Naive thymus-derived CD4-positive, alpha-beta T cell (primary cell): ENCODE measurements at regions of chr2 and their contacts with region 1.

Region 1: GRCh38 chr2:84905181-84906107 is at the start of gene TMSB10:
- DNase-seq: peak; percentile 87 to 98 (median 94)
- ATAC-seq: peak; percentile 88
- H3K4me3 ChIP-seq: peak within 1 kb of the TSS; percentile 89
- H3K4me3 Mint-ChIP-seq: peak within 1 kb of the TSS; percentile 90 to 98 (median 95)
- H3K27ac ChIP-seq: peak within 1 kb of the TSS; percentile 81
- H3K27ac Mint-ChIP-seq: peak within 1 kb of the TSS; percentile 89 to 99 (median 96)
- H3K4me1 ChIP-seq: peaks cover 30 to 34% of the 10 kb centered on the region in 2 donors
- H3K4me1 Mint-ChIP-seq: peaks cover 39 to 73% (median 67%) of the 10 kb centered on the region in 7 donors
- H3K27me3 ChIP-seq: no peaks in the 10 kb centered on the region
- H3K27me3 Mint-ChIP-seq: peaks cover 0 to 2% (median 0%) of the 10 kb centered on the region in 5 donors
- total RNA-seq, gene TMSB10: 1,492 to 5,756 (median 1,578) TPM

Region 2: GRCh38 chr2:84516234-84516986 is 389.0 kb before region 1 on chr2 and contains the start of gene DNAH6:
- CTCF ChIA-PET with region 1: no interaction called
- POLR2A ChIA-PET with region 1: interaction called, 3 read pairs
- intact Hi-C with region 1: loop called in 1 of 2 experiments (anchors 1 kb)
- DNase-seq: peak; percentile 67 to 94 (median 89)
- ATAC-seq: peak; percentile 99
- H3K4me3 ChIP-seq: peak within 1 kb of the TSS; percentile 78
- H3K4me3 Mint-ChIP-seq: peak within 1 kb of the TSS; percentile 79 to 93 (median 90)
- H3K27ac ChIP-seq: peak within 1 kb of the TSS; percentile 75
- H3K27ac Mint-ChIP-seq: peak within 1 kb of the TSS; percentile 66 to 98 (median 93)
- H3K4me1 ChIP-seq: peaks cover 5 to 6% of the 10 kb centered on the region in 2 donors
- H3K4me1 Mint-ChIP-seq: peaks cover 6 to 27% (median 23%) of the 10 kb centered on the region in 7 donors
- H3K27me3 ChIP-seq: no peaks in the 10 kb centered on the region
- H3K27me3 Mint-ChIP-seq: peaks cover 0 to 41% (median 0%) of the 10 kb centered on the region in 5 donors
- total RNA-seq, gene DNAH6: 0.73 to 2.3 (median 1.1) TPM

Region 3: DNA sequence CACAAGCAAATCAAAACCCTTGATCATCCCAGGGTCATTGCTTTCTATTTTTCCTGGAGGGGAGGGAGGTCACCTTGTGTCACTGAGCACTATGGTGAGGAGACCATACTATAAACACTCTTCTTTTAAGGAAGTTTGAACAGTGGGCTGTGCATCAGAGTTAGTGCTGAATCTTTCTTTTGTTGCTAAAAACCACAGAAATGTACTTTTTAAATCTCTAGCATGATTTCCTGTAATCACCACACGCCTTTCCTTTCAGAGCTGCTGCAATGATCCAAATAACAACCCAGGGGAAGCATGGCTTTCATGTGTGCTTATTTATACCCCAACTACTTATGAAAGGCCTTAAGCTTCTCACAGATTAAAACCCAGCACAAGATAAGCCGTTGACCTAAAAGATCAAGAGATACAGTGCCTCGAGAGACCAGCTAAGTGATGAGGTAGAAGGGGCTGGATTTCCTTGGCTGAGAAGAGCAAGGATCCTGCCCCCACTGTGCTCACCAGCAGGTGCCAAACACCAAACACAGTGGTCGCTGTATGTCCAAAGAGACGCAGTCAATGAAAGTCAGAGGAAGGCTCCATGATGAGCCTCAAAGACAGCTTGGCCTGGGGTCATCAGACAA is 59.3 kb before region 1 on chr2:
- CTCF ChIA-PET with region 1: interaction called, 4 read pairs
- POLR2A ChIA-PET with region 1: interaction called, 67 read pairs
- intact Hi-C with region 1: loop called (anchors 2 to 5 kb)
- DNase-seq: peak in 7 of 9 donors; percentile 68 to 89 (median 84)
- ATAC-seq: peak; percentile 85
- H3K4me3 ChIP-seq: peak overlapping the region; percentile 14
- H3K4me3 Mint-ChIP-seq: peak overlapping the region; percentile 72 to 87 (median 82)
- H3K27ac ChIP-seq: peak overlapping the region; percentile 80
- H3K27ac Mint-ChIP-seq: peak overlapping the region in 8 of 9 donors; percentile 94 to 99 (median 97)
- H3K4me1 ChIP-seq: peaks cover 93 to 98% of the 10 kb centered on the region in 2 donors
- H3K4me1 Mint-ChIP-seq: peaks cover 77 to 100% (median 92%) of the 10 kb centered on the region in 7 donors
- H3K27me3 ChIP-seq: no peaks in the 10 kb centered on the region
- H3K27me3 Mint-ChIP-seq: no peaks in the 10 kb centered on the region

Region 4: DNA sequence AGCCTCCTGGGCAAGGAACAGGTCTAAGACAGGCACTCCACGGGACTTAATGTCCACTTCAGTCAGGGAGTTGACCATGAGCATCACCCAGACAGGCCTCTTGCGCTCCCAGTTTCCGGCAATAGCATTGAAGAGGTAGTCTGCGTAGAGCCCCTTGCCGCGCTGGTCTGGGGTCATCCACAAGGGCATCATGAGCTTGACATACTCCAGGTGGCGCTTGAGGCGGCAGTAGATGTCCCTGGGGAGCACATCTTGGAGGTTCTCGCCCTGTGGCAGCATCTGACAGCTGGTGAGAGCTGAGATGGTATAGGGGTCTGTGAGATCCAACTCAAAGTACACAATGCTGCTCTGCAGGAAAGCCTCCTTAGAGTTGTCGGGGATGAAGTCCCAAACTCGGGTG is 35.1 kb before region 1 on chr2:
- CTCF ChIA-PET with region 1: interaction called, 3 read pairs
- POLR2A ChIA-PET with region 1: interaction called, 617 read pairs
- intact Hi-C with region 1: no loop called
- DNase-seq: no peak
- ATAC-seq: no peak
- H3K4me3 ChIP-seq: no peak overlapping the region
- H3K4me3 Mint-ChIP-seq: peak overlapping the region; percentile 15 to 89 (median 68)
- H3K27ac ChIP-seq: peak overlapping the region; percentile 24
- H3K27ac Mint-ChIP-seq: peak overlapping the region in 8 of 9 donors; percentile 33 to 98 (median 92)
- H3K4me1 ChIP-seq: peaks cover 2 to 75% of the 10 kb centered on the region in 2 donors
- H3K4me1 Mint-ChIP-seq: peaks cover 34 to 97% (median 87%) of the 10 kb centered on the region in 7 donors
- H3K27me3 ChIP-seq: no peaks in the 10 kb centered on the region
- H3K27me3 Mint-ChIP-seq: no peaks in the 10 kb centered on the region

Region 5: GRCh38 chr2:84894758-84895520 is 10.5 kb before region 1 on chr2:
- CTCF ChIA-PET with region 1: interaction called, 23 read pairs
- POLR2A ChIA-PET with region 1: interaction called, 617 read pairs
- intact Hi-C with region 1: loop called (anchors 1 kb)
- DNase-seq: peak in 6 of 9 donors; percentile 36 to 61 (median 53)
- ATAC-seq: peak; percentile 70
- H3K4me3 ChIP-seq: peak overlapping the region; percentile 40
- H3K4me3 Mint-ChIP-seq: peak overlapping the region; percentile 47 to 82 (median 71)
- H3K27ac ChIP-seq: peak overlapping the region; percentile 77
- H3K27ac Mint-ChIP-seq: peak overlapping the region; percentile 53 to 99 (median 93)
- H3K4me1 ChIP-seq: peaks cover 37 to 47% of the 10 kb centered on the region in 2 donors
- H3K4me1 Mint-ChIP-seq: peaks cover 40 to 71% (median 64%) of the 10 kb centered on the region in 7 donors
- H3K27me3 ChIP-seq: no peaks in the 10 kb centered on the region
- H3K27me3 Mint-ChIP-seq: no peaks in the 10 kb centered on the region

Region 6: GRCh38 chr2:84939426-84940087 is 34.1 kb after region 1 on chr2:
- CTCF ChIA-PET with region 1: no interaction called
- POLR2A ChIA-PET with region 1: interaction called, 34 read pairs
- intact Hi-C with region 1: loop called in 1 of 2 experiments (anchors 1 kb)
- DNase-seq: peak; percentile 31 to 76 (median 65)
- ATAC-seq: peak; percentile 92
- H3K4me3 ChIP-seq: peak overlapping the region; percentile 29
- H3K4me3 Mint-ChIP-seq: peak overlapping the region; percentile 66 to 90 (median 82)
- H3K27ac ChIP-seq: peak overlapping the region; percentile 72
- H3K27ac Mint-ChIP-seq: peak overlapping the region; percentile 88 to 100 (median 98)
- H3K4me1 ChIP-seq: peaks cover 20 to 21% of the 10 kb centered on the region in 2 donors
- H3K4me1 Mint-ChIP-seq: peaks cover 17 to 68% (median 34%) of the 10 kb centered on the region in 7 donors
- H3K27me3 ChIP-seq: no peaks in the 10 kb centered on the region
- H3K27me3 Mint-ChIP-seq: no peaks in the 10 kb centered on the region

Region 7: GRCh38 chr2:84954329-84954728 is 48.9 kb after region 1 on chr2:
- CTCF ChIA-PET with region 1: no interaction called
- POLR2A ChIA-PET with region 1: no interaction called
- intact Hi-C with region 1: no loop called
- DNase-seq: no peak
- ATAC-seq: no peak
- H3K4me3 ChIP-seq: no peak overlapping the region
- H3K4me3 Mint-ChIP-seq: no peak overlapping the region
- H3K27ac ChIP-seq: no peak overlapping the region
- H3K27ac Mint-ChIP-seq: peak overlapping the region in 2 of 9 donors; percentile 11 to 47
- H3K4me1 ChIP-seq: no peaks in the 10 kb centered on the region
- H3K4me1 Mint-ChIP-seq: peaks cover 7 to 23% (median 11%) of the 10 kb centered on the region in 7 donors
- H3K27me3 ChIP-seq: no peaks in the 10 kb centered on the region
- H3K27me3 Mint-ChIP-seq: no peaks in the 10 kb centered on the region

Region 8: GRCh38 chr2:84970868-84971509 is 65.5 kb after region 1 on chr2 and contains the start of gene KCMF1:
- CTCF ChIA-PET with region 1: no interaction called
- POLR2A ChIA-PET with region 1: interaction called, 15 read pairs
- intact Hi-C with region 1: loop called in 1 of 2 experiments (anchors 1 kb)
- DNase-seq: peak; percentile 56 to 83 (median 68)
- ATAC-seq: peak; percentile 72
- H3K4me3 ChIP-seq: peak within 1 kb of the TSS; percentile 85
- H3K4me3 Mint-ChIP-seq: peak within 1 kb of the TSS; percentile 89 to 100 (median 99)
- H3K27ac ChIP-seq: peak within 1 kb of the TSS; percentile 95
- H3K27ac Mint-ChIP-seq: peak within 1 kb of the TSS; percentile 97 to 100 (median 99)
- H3K4me1 ChIP-seq: peaks cover 31 to 33% of the 10 kb centered on the region in 2 donors
- H3K4me1 Mint-ChIP-seq: peaks cover 44 to 67% (median 57%) of the 10 kb centered on the region in 7 donors
- H3K27me3 ChIP-seq: no peaks in the 10 kb centered on the region
- H3K27me3 Mint-ChIP-seq: peaks cover 0 to 4% (median 0%) of the 10 kb centered on the region in 5 donors
- total RNA-seq, gene KCMF1: 57.7 to 81.3 (median 60.8) TPM

Region 9: DNA sequence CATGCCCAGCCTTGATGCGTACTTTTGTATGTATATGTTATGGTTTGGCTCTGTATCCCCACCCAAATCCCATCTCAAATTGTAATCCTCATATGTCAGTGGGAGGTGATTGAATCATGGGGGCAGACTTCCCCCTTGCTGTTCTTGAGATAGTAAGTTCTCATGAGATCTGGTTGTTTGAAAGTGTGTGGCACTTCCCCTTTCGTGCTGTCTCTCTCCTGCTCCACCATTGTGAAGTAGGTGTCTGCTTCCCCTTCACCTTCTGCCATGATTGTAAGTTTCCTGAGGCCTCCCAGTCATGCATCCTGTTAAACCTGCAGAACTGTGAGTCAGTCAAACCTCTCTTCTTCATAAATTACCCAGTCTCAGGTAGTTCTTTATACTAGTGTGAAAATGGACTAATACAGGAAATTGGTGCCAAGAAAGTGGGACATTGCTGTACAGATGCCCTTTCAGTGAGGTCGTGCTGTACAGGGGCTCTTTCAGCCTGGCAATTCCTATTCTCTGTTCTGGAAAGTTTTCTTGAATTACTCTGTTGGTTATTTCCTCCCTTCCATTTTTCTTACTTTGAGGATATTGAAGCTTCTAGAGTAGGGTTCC is 103.7 kb after region 1 on chr2:
- CTCF ChIA-PET with region 1: no interaction called
- POLR2A ChIA-PET with region 1: no interaction called
- intact Hi-C with region 1: no loop called
- DNase-seq: no peak
- ATAC-seq: peak; percentile 44
- H3K4me3 ChIP-seq: no peak overlapping the region
- H3K4me3 Mint-ChIP-seq: peak overlapping the region in 5 of 10 donors; percentile 5 to 53 (median 20)
- H3K27ac ChIP-seq: no peak overlapping the region
- H3K27ac Mint-ChIP-seq: peak overlapping the region in 8 of 9 donors; percentile 7 to 86 (median 71)
- H3K4me1 ChIP-seq: peaks cover 3 to 25% of the 10 kb centered on the region in 2 donors
- H3K4me1 Mint-ChIP-seq: peaks cover 47 to 78% (median 66%) of the 10 kb centered on the region in 7 donors
- H3K27me3 ChIP-seq: no peaks in the 10 kb centered on the region
- H3K27me3 Mint-ChIP-seq: no peaks in the 10 kb centered on the region